ENCODE measurements at regions of chr22 and their contacts with region 1.

Region 1: DNA sequence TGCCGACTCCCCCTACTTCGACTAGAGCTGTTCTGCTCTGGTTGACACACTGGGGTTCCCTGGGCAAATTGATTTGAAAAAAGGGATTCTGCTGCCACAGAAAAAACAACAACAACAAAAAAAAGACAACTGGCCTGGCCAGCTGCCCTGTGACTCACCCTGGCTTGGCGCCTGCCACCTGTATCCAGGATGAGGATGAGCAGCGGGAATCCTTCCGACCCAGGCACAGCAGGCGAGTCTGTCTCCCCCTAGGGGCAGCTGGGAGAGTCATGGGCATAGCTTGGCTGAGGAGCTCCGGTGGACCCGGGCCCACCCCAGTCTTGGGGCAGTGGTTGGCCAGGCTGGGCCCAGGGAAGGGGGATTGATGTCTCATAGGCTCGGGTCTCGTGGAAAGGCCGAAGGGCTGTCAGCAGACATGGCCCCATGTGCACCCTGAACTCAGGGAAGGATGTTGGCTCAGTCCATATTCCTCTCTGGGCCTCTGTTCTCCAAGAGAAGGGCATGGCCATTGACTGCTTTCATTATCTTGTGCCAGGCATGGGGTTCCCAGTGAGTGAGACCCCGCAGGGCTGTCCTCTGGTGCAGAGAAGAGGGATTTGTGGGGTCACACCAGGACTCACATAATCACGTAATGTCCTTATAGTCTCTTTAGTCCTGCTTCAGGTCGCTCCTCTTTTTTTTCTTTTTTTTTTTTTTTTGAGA is 10.4 kb upstream of the SUN2 start:
- DNase-seq: peak; percentile 78
- H3K4me3 Mint-ChIP-seq: no peak overlapping the region
- H3K27ac Mint-ChIP-seq: no peak overlapping the region
- H3K4me1 Mint-ChIP-seq: no peaks in the 10 kb centered on the region
- H3K27me3 Mint-ChIP-seq: peaks cover 10% of the 10 kb centered on the region
- CTCF ChIP-seq: peak; percentile 77

Region 2: DNA sequence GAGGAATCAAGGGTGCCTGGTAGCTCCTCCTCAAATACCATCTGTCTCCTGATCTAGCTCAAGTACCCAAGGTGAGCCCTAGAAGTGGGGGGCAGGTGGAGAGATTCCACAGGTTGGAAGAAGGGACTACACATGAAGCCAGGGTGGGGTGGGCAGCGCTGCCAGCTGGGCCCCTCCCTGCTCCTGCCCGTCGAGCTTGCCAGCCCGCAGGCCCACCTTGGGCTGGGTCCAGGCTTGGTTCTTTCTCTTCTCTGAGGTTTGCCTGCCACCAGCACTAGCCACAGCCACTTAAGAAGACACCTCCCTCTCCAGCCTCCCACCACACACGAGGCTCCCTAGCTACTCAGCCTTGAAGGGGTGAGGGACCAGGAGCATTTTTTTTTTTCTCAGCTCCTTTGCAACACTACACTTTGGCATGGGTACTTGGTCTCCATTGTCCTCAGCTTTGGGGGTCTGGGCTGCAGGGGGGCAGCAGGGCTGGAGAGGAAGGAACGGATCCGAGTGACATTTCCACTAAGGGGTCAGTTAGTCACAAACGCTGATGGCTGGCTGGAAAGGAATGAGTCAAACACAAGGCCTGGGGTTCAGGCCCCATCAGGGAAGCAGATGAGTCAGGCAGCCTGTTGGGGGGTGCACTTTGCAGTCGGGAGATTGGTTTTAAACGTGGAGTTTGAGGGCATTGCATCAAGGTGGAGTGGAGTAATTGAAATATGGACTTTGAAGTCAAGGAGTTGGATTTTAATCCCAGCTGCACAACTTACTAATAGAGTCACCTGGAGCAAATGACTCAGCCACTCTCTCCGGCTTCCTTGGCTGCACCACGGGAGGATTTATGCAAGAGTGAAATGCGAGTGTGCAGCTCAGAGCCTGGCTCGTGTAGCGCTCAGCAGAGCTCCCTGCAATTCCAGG is 85.0 kb after region 1 on chr22:
- CTCF ChIA-PET with region 1: interaction called, 5 read pairs
- intact Hi-C with region 1: loop called (anchors 10 kb)
- DNase-seq: no peak
- H3K4me3 Mint-ChIP-seq: no peak overlapping the region
- H3K27ac Mint-ChIP-seq: no peak overlapping the region
- H3K4me1 Mint-ChIP-seq: peaks cover 6% of the 10 kb centered on the region
- H3K27me3 Mint-ChIP-seq: peaks cover 62% of the 10 kb centered on the region
- CTCF ChIP-seq: no peak

Region 3: DNA sequence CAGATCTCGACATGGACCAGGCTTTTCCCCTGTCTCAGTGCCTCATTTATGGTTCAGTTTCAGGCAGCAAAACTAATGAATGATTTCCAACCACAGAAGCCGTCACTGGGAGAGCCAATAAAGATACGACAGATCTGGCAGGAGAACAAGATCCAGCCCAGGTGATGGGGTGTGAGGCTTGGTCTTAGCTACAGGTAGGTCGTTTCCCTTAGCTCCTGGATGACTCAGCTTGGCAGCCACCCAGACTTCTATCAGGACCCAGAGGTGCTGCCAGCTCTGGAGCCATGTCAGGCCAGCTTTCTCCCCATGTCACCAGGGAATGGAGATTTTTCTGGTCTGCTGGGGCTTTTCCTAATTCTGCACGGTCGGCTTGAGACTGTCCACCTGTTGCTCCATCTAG is 154.9 kb after region 1 on chr22:
- CTCF ChIA-PET with region 1: interaction called, 16 read pairs
- intact Hi-C with region 1: no loop called
- DNase-seq: peak; percentile 93
- H3K4me3 Mint-ChIP-seq: peak overlapping the region; percentile 36
- H3K27ac Mint-ChIP-seq: peak overlapping the region; percentile 58
- H3K4me1 Mint-ChIP-seq: peaks cover 31% of the 10 kb centered on the region
- H3K27me3 Mint-ChIP-seq: no peaks in the 10 kb centered on the region
- CTCF ChIP-seq: no peak

Region 4: DNA sequence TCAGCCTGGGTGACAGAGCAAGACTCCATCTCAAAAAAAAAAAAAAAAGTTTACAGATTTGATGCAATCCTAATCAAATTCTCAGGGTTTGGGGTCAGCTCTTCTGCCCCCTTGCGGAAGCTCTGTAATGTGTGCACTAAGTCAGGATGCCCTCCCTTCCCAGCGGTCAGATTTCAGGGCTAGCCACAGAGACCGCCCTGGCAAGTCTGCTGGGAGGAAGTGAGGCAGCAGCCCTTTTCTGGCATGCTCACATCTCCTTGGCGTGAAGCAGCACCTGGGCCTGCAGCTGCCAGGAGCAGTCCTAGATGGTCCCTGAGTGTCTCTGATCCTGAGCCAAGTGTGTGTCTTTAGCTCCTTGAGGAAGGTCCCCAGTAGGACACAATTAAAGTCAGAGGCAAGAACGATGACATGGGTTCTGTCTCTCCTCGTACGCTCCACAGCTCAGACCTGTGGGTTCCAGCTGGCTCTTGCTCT is 237.0 kb after region 1 on chr22:
- CTCF ChIA-PET with region 1: interaction called, 20 read pairs
- intact Hi-C with region 1: no loop called
- DNase-seq: peak; percentile 85
- H3K4me3 Mint-ChIP-seq: no peak overlapping the region
- H3K27ac Mint-ChIP-seq: no peak overlapping the region
- H3K4me1 Mint-ChIP-seq: no peaks in the 10 kb centered on the region
- H3K27me3 Mint-ChIP-seq: no peaks in the 10 kb centered on the region
- CTCF ChIP-seq: peak; percentile 76

Region 5: GRCh38 chr22:39123751-39124601 is 357.7 kb after region 1 on chr22:
- CTCF ChIA-PET with region 1: interaction called, 18 read pairs
- intact Hi-C with region 1: loop called (anchors 5 kb)
- DNase-seq: no peak
- H3K4me3 Mint-ChIP-seq: no peak overlapping the region
- H3K27ac Mint-ChIP-seq: no peak overlapping the region
- H3K4me1 Mint-ChIP-seq: peaks cover 11% of the 10 kb centered on the region
- H3K27me3 Mint-ChIP-seq: no peaks in the 10 kb centered on the region
- CTCF ChIP-seq: no peak

Measured in Calu3 (cell line).